Thyroid gland (tissue), 4 donors: ENCODE measurements at regions of chr5 and their contacts with region 1.

Region 1: GRCh38 chr5:116574367-116575325 is at the start of gene SEMA6A:
- DNase-seq: peak; percentile 94 to 96
- H3K4me3 ChIP-seq: peak within 1 kb of the TSS; percentile 43 to 59 (median 57)
- H3K27ac ChIP-seq: peak within 1 kb of the TSS; percentile 63 to 71 (median 70)
- H3K4me1 ChIP-seq: no peaks in the 10 kb centered on the region
- H3K27me3 ChIP-seq: no peaks in the 10 kb centered on the region
- CTCF ChIP-seq: peak in 3 of 6 experiments; percentile 13 to 42 (median 15)
- POLR2A ChIP-seq: peak; percentile 73 to 95
- total RNA-seq, gene SEMA6A: 27.6 to 37.9 (median 30.4) TPM

Region 2: DNA sequence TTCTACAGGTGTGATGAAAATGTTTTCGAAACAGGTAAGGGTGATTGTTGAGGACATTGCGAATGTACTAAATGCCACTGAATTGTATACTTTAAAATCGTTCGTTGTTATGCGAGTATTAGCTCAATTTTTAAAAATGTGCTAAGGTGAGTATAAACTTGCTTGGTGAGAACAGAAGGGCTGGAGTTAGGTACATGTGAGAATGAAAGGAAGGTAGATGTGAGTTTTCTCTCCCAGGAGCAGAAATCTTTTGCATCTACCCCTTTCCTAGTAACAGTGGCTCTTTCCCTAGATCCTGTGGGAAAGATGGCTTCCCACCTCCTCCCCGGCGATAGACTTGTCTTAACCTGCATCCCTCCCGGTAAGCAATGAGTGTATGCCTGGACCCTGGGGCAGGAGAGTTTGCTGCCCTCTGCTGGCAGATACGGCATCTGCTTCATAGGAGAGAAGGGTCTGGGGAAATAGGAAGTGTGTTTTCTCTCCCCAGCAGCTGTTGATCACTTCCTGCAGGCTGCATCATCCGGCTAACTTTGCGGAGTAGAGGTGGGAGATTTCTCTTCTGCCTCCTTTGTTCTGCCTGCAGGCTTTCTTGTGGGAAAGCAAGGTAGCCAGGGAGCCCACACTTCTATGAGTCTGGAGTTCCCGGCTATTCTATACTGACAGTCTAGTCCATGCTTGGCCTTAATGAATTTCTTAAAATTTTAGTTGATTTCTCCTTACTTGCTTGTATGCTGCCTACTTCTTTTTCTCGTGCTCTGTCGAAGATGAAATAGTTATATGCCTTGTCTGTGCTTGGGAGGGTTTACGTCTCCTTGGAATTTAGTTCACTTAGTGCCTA is 373.3 kb after region 1 on chr5:
- intact Hi-C with region 1: loop called (anchors 5 kb)
- DNase-seq: peak; percentile 67 to 76
- H3K4me3 ChIP-seq: no peak overlapping the region
- H3K27ac ChIP-seq: no peak overlapping the region
- H3K4me1 ChIP-seq: no peaks in the 10 kb centered on the region
- H3K27me3 ChIP-seq: no peaks in the 10 kb centered on the region
- CTCF ChIP-seq: peak; percentile 15 to 67 (median 65)
- POLR2A ChIP-seq: no peak